ENCODE measurements at regions of chrX and their contacts with region 1.

Region 1: DNA sequence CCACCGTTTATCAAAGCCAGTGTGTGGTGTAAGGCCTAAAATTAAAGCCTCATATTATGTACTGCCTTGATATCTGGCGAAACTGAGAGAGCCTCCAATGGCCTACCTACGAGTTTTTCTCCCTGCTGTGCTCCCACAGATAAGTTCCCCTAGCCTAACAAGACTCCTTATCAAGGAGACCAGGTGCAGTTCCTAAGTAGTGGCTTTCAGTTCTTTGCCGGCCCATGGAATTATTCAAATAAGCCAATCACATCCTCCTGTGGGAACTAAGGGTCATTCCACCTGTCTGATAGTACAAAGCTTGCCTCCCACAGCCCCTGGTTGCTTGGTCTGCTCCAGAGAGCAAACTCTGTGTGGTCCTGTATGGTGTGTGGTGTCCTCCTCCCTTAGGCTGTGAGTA is 99.8 kb upstream of the TEX13C start:
- DNase-seq: no peak
- H3K4me3 ChIP-seq: no peak overlapping the region
- H3K27ac ChIP-seq: no peak overlapping the region
- H3K4me1 ChIP-seq: no peaks in the 10 kb centered on the region
- H3K27me3 ChIP-seq: no peaks in the 10 kb centered on the region
- CTCF ChIP-seq: no peak
- EP300 ChIP-seq: no peak
- POLR2A ChIP-seq: no peak

Region 2: GRCh38 chrX:124836786-124837185 is 383.1 kb before region 1 on chrX:
- intact Hi-C with region 1: no loop called
- DNase-seq: no peak
- H3K4me3 ChIP-seq: no peak overlapping the region
- H3K27ac ChIP-seq: no peak overlapping the region
- H3K4me1 ChIP-seq: no peaks in the 10 kb centered on the region
- H3K27me3 ChIP-seq: no peaks in the 10 kb centered on the region
- CTCF ChIP-seq: no peak
- EP300 ChIP-seq: no peak
- POLR2A ChIP-seq: no peak

Region 3: GRCh38 chrX:124895947-124896346 is 323.9 kb before region 1 on chrX:
- intact Hi-C with region 1: no loop called
- DNase-seq: no peak
- H3K4me3 ChIP-seq: no peak overlapping the region
- H3K27ac ChIP-seq: no peak overlapping the region
- H3K4me1 ChIP-seq: no peaks in the 10 kb centered on the region
- H3K27me3 ChIP-seq: no peaks in the 10 kb centered on the region
- CTCF ChIP-seq: no peak
- EP300 ChIP-seq: no peak
- POLR2A ChIP-seq: no peak

Region 4: DNA sequence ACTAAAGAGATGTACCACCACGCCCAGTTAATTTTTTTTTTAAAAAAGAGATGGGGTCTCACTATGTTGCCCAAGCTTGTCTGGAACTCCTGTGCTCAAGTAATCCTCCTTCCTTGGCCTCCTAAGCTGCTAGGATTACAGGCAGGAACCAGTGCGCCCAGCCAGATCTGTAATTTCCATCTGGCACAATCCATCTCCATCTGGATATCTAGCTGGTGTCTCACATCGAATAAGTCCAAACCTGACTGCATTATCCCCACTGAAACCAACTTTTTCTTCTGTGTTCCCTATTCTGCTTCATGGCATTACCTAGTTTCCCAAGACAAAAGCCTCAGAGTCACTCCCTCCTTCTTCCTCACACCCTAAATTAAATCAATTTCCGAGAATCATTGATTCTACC is 25.9 kb before region 1 on chrX:
- intact Hi-C with region 1: loop called in 1 of 4 experiments (anchors 1 kb)
- DNase-seq: no peak
- H3K4me3 ChIP-seq: no peak overlapping the region
- H3K27ac ChIP-seq: no peak overlapping the region
- H3K4me1 ChIP-seq: no peaks in the 10 kb centered on the region
- H3K27me3 ChIP-seq: no peaks in the 10 kb centered on the region
- CTCF ChIP-seq: no peak
- EP300 ChIP-seq: no peak
- POLR2A ChIP-seq: no peak

Measured in ovary (tissue), 10 donors.